PC-3 (cell line): ENCODE measurements at regions of chr7 and their contacts with region 1.

Region 1: GRCh38 chr7:46687200-46687599 is 766.1 kb upstream of the IGFBP3 start:
- DNase-seq: no peak
- ATAC-seq: no peak
- H3K4me3 ChIP-seq: no peak overlapping the region
- H3K27ac ChIP-seq: no peak overlapping the region
- H3K4me1 ChIP-seq: no peaks in the 10 kb centered on the region
- H3K27me3 ChIP-seq: no peaks in the 10 kb centered on the region
- CTCF ChIP-seq: no peak

Region 2: GRCh38 chr7:46745707-46746090 is 58.5 kb after region 1 on chr7:
- CTCF ChIA-PET with region 1: no interaction called
- POLR2A ChIA-PET with region 1: interaction called, 10 read pairs
- intact Hi-C with region 1: no loop called
- DNase-seq: peak; percentile 2
- ATAC-seq: peak; percentile 41
- H3K4me3 ChIP-seq: no peak overlapping the region
- H3K27ac ChIP-seq: no peak overlapping the region
- H3K4me1 ChIP-seq: peaks cover 26% of the 10 kb centered on the region
- H3K27me3 ChIP-seq: no peaks in the 10 kb centered on the region
- CTCF ChIP-seq: 0 out of 2 replicates have a peak, but pooled peaks have one; percentile 20